B cell (primary cell): ENCODE measurements at regions of chr6 and their contacts with region 1.

Region 1: DNA sequence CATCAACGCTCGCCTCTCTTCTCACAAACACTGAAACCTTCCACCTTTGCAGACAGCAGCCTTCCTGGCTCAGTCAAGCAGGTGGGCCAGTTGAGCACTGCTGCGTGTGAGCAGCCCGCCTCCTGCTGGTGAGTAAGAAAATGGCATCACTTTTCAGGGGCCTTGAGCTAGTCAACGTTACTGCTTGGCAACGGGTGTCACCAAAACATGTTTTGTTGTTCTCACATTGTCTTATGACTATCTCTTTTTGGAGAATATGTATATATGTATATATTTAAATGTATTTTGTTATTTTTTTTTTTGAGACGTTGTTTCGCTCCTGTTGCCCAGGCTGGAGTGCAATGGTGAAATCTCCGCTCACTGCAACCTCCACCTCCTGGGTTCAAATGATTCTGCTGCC is 97.0 kb upstream of the AGPAT4 start:
- DNase-seq: peak; percentile 72
- ATAC-seq: peak; percentile 64
- H3K4me3 ChIP-seq: no peak overlapping the region
- H3K4me3 Mint-ChIP-seq: no peak overlapping the region
- H3K27ac ChIP-seq: no peak overlapping the region
- H3K27ac Mint-ChIP-seq: no peak overlapping the region
- H3K4me1 ChIP-seq: no peaks in the 10 kb centered on the region
- H3K4me1 Mint-ChIP-seq: no peaks in the 10 kb centered on the region
- H3K27me3 ChIP-seq: no peaks in the 10 kb centered on the region
- H3K27me3 Mint-ChIP-seq: peaks cover 3% of the 10 kb centered on the region
- CTCF ChIP-seq: peak; percentile 95

Region 2: GRCh38 chr6:159862103-159862502 is 1508.8 kb before region 1 on chr6:
- CTCF ChIA-PET with region 1: no interaction called
- POLR2A ChIA-PET with region 1: no interaction called
- intact Hi-C with region 1: loop called (anchors 10 kb)
- DNase-seq: no peak
- ATAC-seq: no peak
- H3K4me3 ChIP-seq: no peak overlapping the region
- H3K4me3 Mint-ChIP-seq: no peak overlapping the region
- H3K27ac ChIP-seq: no peak overlapping the region
- H3K27ac Mint-ChIP-seq: no peak overlapping the region
- H3K4me1 ChIP-seq: no peaks in the 10 kb centered on the region
- H3K4me1 Mint-ChIP-seq: no peaks in the 10 kb centered on the region
- H3K27me3 ChIP-seq: peaks cover 0 to 7% (median 3%) of the 10 kb centered on the region in 4 experiments
- H3K27me3 Mint-ChIP-seq: peaks cover 24% of the 10 kb centered on the region
- CTCF ChIP-seq: no peak

Region 3: GRCh38 chr6:160733050-160733646 is 637.7 kb before region 1 on chr6:
- CTCF ChIA-PET with region 1: interaction called, 46 read pairs
- POLR2A ChIA-PET with region 1: no interaction called
- intact Hi-C with region 1: no loop called
- DNase-seq: peak; percentile 55
- ATAC-seq: peak; percentile 62
- H3K4me3 ChIP-seq: no peak overlapping the region
- H3K4me3 Mint-ChIP-seq: no peak overlapping the region
- H3K27ac ChIP-seq: no peak overlapping the region
- H3K27ac Mint-ChIP-seq: no peak overlapping the region
- H3K4me1 ChIP-seq: no peaks in the 10 kb centered on the region
- H3K4me1 Mint-ChIP-seq: no peaks in the 10 kb centered on the region
- H3K27me3 ChIP-seq: peaks cover 0 to 9% (median 3%) of the 10 kb centered on the region in 4 experiments
- H3K27me3 Mint-ChIP-seq: peaks cover 42% of the 10 kb centered on the region
- CTCF ChIP-seq: peak; percentile 75

Region 4: DNA sequence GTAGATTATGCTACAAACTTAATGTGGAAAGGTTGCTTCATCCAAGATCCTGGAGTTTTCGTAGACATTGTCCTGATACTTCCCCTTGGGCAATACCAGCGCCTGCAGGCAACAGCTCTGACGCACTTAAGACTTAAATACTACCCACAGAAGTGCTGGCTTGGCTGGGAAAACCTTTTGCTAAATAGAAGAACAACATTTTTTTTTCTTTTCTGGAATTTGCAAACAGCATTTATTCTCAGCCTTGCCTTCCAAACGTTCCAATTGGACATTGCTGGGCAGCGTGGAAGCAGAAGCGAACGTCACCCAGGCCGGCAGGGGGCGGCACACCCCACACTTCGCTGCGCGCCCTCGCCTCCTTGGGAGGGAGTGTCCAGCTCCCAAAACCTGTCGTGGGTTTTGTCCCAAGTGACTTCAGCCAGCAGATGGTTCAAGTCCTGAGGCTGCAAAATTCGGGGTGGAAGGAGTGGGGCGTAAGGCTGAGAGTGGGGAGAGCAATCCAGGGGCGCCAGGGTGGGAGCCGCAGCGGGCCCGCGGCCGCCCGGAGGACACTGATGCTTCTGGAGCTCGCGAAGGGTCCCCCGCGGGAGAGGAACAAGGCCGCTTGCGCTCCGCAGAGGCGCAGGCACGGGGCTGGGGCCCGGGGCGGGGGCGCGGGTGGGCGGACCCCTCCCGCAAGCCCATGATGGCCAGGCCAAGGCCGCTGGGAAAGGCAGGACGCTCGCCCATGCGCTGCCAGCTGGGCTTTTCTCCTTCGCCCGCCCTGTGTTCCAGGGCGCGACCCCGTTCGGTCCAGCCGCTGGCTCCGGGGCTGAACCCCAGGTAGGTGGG is 440.1 kb before region 1 on chr6:
- CTCF ChIA-PET with region 1: interaction called, 252 read pairs
- POLR2A ChIA-PET with region 1: no interaction called
- intact Hi-C with region 1: no loop called
- DNase-seq: peak; percentile 52
- ATAC-seq: no peak
- H3K4me3 ChIP-seq: no peak overlapping the region
- H3K4me3 Mint-ChIP-seq: peak overlapping the region; percentile 43
- H3K27ac ChIP-seq: no peak overlapping the region
- H3K27ac Mint-ChIP-seq: no peak overlapping the region
- H3K4me1 ChIP-seq: peaks cover 3 to 6% of the 10 kb centered on the region in 2 donors
- H3K4me1 Mint-ChIP-seq: peaks cover 6% of the 10 kb centered on the region
- H3K27me3 ChIP-seq: peaks cover 0 to 19% (median 6%) of the 10 kb centered on the region in 4 experiments
- H3K27me3 Mint-ChIP-seq: peaks cover 45% of the 10 kb centered on the region
- CTCF ChIP-seq: peak; percentile 75

Region 5: DNA sequence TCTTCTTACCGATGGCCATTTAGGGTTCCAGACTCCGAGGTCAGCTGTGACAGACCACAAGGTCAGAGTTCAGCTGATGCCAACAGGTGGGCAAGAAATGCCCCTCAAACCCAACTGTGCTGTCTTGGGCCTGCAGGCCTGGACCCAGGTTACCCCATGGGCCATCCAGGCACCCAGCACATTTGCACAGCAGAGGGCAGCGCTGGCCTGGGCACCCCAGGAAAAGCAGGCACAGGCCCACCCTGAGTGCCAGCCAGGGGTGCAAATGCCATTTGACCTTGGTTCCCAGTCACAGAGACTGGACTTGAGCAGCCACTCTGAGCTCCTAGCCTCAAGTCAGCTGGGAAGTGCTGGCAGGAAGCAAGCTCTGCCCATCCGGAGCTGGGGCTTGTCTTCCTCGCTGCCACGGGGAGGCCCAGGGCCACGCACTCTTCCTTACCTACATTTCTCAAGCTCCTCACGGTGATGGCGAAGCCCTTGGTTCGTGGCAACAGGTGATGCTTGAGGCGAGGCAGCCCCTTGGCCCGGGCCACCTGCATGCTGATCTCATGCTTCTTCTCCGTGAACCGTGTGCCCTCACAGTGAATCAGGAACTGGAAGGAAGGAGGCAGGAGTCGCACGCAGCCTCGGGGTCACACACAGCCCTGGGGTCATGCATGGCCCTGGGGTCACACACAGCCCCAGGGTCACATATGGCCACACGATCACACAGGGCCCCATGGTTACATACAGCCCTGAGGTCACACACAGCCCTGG is 217.8 kb before region 1 on chr6:
- CTCF ChIA-PET with region 1: interaction called, 38 read pairs
- POLR2A ChIA-PET with region 1: no interaction called
- intact Hi-C with region 1: no loop called
- DNase-seq: peak; percentile 24
- ATAC-seq: no peak
- H3K4me3 ChIP-seq: no peak overlapping the region
- H3K4me3 Mint-ChIP-seq: no peak overlapping the region
- H3K27ac ChIP-seq: no peak overlapping the region
- H3K27ac Mint-ChIP-seq: no peak overlapping the region
- H3K4me1 ChIP-seq: no peaks in the 10 kb centered on the region
- H3K4me1 Mint-ChIP-seq: no peaks in the 10 kb centered on the region
- H3K27me3 ChIP-seq: no peaks in the 10 kb centered on the region
- H3K27me3 Mint-ChIP-seq: no peaks in the 10 kb centered on the region
- CTCF ChIP-seq: peak; percentile 44

Region 6: DNA sequence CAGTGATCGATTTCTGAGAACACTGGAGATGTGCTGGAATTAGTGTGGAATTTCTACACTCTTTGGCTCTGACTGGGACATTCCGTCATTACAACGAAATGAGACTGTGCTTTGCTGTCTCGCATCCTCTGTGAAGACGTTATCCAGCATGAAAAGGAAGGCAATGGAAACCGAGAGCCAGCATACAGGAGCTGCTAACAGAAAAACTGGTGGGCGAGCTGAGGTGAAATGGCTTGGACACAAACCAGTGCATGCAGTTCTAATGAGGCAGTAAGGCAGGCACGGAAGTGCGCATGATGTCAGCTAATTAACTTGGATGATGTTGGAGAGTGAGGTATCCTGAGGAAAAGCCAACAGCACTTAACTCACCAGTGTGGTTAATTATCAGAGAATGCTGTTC is 105.8 kb after region 1 on chr6:
- CTCF ChIA-PET with region 1: no interaction called
- POLR2A ChIA-PET with region 1: no interaction called
- intact Hi-C with region 1: no loop called
- DNase-seq: no peak
- ATAC-seq: no peak
- H3K4me3 ChIP-seq: no peak overlapping the region
- H3K4me3 Mint-ChIP-seq: no peak overlapping the region
- H3K27ac ChIP-seq: no peak overlapping the region
- H3K27ac Mint-ChIP-seq: no peak overlapping the region
- H3K4me1 ChIP-seq: no peaks in the 10 kb centered on the region
- H3K4me1 Mint-ChIP-seq: no peaks in the 10 kb centered on the region
- H3K27me3 ChIP-seq: no peaks in the 10 kb centered on the region
- H3K27me3 Mint-ChIP-seq: no peaks in the 10 kb centered on the region
- CTCF ChIP-seq: no peak